ENCODE measurements at regions of chr11 and their contacts with region 1.

Region 1: DNA sequence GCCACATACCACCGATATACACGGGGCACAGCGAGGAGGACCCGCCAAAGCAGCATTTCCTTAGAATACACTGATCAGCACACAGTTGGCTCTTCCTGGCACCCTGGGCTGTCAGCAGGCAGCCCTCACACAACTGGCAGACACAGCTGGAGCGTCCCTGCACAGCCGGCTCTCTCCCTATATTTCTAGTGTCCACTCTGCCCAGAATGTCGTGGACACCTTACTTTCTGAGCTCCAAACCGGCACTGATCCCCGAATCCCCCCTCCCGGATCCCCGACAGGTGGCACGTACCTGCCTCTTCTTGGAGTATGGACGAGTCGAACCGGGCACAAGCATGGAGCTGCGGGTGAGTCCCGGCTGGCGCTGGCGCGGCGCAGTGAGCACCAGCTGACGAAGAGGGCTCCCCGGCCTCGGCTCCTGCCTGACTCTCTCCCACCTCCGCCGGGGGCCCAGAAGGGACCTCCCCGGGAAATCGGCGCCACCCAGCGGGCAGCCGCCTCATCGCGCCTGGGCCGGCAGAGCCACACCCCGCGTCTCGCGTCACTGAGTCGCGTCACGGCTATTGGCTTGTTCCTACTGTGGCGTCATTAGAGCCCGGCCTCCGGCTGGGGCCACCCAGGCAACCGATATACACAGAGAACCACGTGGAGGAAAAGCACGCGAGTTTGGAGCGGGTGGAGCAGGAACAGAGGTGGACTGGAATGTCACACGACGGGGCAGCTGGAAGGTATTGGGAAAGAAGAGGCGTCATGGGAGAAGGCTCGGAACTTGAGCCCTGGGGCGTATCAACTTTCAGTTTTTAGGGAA is at the start of gene USP2:
- DNase-seq: peak; percentile 97 to 99
- ATAC-seq: peak; percentile 99
- H3K4me3 ChIP-seq: no peak within 1 kb of the TSS
- H3K27ac ChIP-seq: no peak within 1 kb of the TSS
- H3K4me1 ChIP-seq: no peaks in the 10 kb centered on the region
- H3K27me3 ChIP-seq: no peaks in the 10 kb centered on the region
- total RNA-seq, gene USP2: 1.6 to 3.0 TPM

Region 2: GRCh38 chr11:119306373-119306890 is 75.0 kb before region 1 on chr11:
- intact Hi-C with region 1: no loop called
- DNase-seq: peak in 1 of 2 donors; percentile 79
- ATAC-seq: peak; percentile 86
- H3K4me3 ChIP-seq: no peak overlapping the region
- H3K27ac ChIP-seq: peak overlapping the region in 1 of 2 donors; percentile 49
- H3K4me1 ChIP-seq: peaks cover 0 to 3% of the 10 kb centered on the region in 2 donors
- H3K27me3 ChIP-seq: no peaks in the 10 kb centered on the region

Region 3: GRCh38 chr11:119474682-119475596 is 93.6 kb after region 1 on chr11:
- intact Hi-C with region 1: loop called (anchors 5 to 10 kb)
- DNase-seq: peak in 1 of 2 donors; percentile 69
- ATAC-seq: peak; percentile 73
- H3K4me3 ChIP-seq: no peak overlapping the region
- H3K27ac ChIP-seq: no peak overlapping the region
- H3K4me1 ChIP-seq: no peaks in the 10 kb centered on the region
- H3K27me3 ChIP-seq: no peaks in the 10 kb centered on the region

Region 4: DNA sequence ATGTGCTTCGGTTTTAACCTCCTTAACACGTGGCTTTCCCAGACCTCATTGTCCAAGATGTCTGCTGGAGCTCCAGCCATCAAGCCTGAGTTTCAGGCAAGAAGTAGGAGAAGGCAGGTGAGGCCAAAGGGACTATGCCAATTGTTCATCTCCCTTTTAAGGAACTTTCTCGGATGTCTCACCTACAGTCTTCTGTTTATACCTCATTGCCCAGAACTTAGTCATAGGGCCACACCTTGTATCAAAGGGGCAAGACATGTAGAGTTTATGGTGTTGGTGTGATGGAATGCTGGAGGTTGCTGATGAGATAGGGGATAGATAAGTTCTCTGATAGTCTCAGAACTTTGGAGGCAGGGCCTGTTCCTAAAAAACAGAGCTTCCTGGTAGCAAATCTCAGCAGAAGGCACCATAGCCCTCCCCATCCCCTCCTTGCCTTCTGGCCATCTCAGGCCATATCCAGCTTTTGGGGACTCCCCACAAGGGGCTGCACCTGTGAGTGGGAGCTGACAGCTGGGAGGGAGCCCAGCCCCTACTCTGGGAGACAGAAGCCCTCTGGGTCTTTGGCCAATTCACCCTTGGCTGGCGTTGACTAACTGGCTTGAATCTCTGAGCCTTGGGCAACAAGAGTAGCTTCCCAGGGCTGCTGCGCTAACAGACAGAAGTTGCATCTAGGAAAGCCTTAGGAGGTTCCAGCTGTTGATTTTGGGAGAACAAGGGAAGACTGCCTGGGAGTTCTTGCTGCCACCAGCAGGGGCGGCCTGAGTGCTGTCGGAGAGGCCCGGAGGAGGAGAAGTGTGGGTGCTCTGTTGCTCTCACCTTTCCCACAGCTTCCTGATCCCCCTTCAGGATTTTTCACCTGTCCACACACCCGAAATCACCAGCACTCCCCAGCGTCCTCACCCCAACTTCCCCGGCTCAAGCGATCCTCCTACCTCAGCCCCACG is 191.4 kb after region 1 on chr11:
- intact Hi-C with region 1: no loop called
- DNase-seq: no peak
- ATAC-seq: no peak
- H3K4me3 ChIP-seq: no peak overlapping the region
- H3K27ac ChIP-seq: no peak overlapping the region
- H3K4me1 ChIP-seq: no peaks in the 10 kb centered on the region
- H3K27me3 ChIP-seq: peaks cover 0 to 2% of the 10 kb centered on the region in 2 donors

Measured in aorta (tissue), 5 donors.